Activated CD4-positive, alpha-beta T cell treated with anti-CD3 and anti-CD28 coated beads, Interleukin-2, amount 10 ng/mL, durations not matched to agents 24 days and 14 days (primary cell): ENCODE measurements at regions of chr6 and their contacts with region 1.

Region 1: GRCh38 chr6:149284904-149285303 is 32.6 kb upstream of the TAB2 start:
- DNase-seq: peak; percentile 71
- H3K4me3 Mint-ChIP-seq: peak overlapping the region; percentile 35
- H3K27ac Mint-ChIP-seq: peak overlapping the region; percentile 83
- H3K4me1 Mint-ChIP-seq: peaks cover 41% of the 10 kb centered on the region
- H3K27me3 Mint-ChIP-seq: no peaks in the 10 kb centered on the region

Region 2: DNA sequence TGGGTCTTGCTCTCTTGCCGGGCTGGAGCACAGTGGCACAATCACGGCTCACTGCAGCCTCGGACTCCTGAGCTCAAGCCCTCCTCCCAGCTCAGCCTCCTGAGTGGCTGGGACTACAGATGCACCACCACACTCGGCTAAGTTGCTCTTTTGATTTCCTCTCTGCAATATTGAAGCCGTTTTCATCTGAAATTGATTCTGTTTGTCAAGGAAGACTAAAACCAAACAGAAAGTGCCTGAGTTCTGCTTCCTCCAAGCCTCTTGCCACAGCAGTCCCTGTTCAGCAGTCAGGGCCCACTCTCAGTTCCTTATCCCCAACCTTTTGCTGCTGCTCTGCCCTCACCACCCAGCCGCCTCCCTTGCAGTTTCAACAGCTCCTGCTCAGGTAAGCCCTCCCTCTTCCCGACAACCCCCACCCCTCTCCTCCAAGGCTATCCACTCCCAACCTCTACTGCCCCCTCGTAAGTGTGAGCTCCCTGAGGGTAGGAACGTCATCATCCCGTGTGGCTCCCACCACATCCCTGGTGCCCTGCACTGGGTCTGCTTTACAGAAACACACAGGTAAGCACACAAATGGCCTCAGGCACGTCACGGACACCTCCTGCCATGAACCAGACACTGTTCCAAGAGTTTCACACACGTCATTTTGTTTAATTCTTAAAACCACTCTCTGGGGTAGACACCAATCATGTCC is 38.1 kb before region 1 on chr6:
- intact Hi-C with region 1: loop called (anchors 5 kb)
- DNase-seq: no peak
- H3K4me3 Mint-ChIP-seq: peak overlapping the region; percentile 50
- H3K27ac Mint-ChIP-seq: peak overlapping the region; percentile 75
- H3K4me1 Mint-ChIP-seq: peaks cover 38% of the 10 kb centered on the region
- H3K27me3 Mint-ChIP-seq: no peaks in the 10 kb centered on the region

Region 3: DNA sequence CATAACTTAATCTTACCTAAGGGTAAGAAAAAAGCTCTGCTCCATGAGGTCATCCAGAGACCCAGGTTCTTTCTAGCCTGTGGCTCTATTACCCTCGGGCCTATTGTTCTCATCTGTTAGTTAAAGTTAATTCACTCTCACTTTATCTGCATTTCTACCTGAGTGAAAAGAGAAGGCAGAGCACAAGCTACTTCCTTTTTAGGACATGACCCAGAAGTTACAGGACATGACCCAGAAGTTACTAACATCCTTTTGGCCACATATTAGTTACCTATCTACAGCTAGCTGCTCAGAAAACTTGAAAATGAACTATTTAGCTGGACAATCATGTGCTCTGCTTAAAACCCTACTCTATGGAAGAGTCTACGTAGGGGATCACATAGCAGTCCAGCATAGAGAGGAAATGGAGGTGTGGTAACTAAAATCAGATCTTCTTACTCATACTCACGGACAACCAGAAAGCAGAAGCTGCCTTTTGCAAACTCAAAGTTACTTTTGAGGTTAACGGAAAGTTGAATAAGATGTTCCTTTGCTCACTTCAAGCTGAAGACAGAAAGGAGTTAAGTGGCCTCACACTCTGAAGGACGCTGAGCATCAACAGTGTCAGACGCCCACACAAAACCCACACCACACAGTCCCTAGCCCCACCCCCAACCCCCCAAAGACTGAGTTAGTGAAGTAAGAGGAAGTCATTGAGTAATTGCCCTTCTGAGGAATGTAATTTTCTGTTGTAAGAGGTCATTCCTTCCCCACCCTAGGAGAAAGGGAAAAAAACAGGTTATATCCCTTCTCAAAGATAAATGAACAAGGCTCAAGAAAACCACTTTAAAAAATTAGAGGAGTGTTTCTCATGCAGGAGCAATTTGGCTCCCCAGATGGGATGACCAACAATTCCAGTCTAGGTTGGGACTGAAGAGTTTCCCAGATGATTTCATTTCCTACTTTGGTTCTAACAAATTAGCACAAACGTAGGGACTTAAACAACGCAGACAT is 13.3 kb before region 1 on chr6:
- intact Hi-C with region 1: loop called (anchors 2 kb)
- DNase-seq: peak; percentile 74
- H3K4me3 Mint-ChIP-seq: peak overlapping the region; percentile 60
- H3K27ac Mint-ChIP-seq: peak overlapping the region; percentile 94
- H3K4me1 Mint-ChIP-seq: peaks cover 37% of the 10 kb centered on the region
- H3K27me3 Mint-ChIP-seq: no peaks in the 10 kb centered on the region

Region 4: DNA sequence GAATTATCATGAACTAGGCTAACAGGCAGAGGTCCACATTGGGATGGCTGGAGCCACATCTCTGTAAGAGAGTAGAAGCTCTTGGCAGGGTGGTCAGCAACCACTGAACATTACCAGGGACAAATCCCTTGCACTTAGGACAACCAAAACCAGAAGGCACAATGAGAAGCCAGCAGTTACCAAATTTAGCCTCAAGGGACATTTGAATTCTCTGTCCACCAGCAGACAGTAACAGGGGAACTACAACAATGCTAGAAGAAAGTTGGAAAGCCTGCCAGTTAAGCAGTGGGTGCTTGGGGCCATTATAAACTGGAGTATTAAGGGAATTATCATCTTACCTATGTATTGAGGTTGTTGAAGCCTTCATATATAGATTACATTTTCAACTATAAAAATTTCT is 16.2 kb after region 1 on chr6:
- intact Hi-C with region 1: loop called (anchors 2 kb)
- DNase-seq: no peak
- H3K4me3 Mint-ChIP-seq: no peak overlapping the region
- H3K27ac Mint-ChIP-seq: no peak overlapping the region
- H3K4me1 Mint-ChIP-seq: peaks cover 10% of the 10 kb centered on the region
- H3K27me3 Mint-ChIP-seq: no peaks in the 10 kb centered on the region